ENCODE measurements at regions of chr13 and their contacts with region 1.

Region 1: DNA sequence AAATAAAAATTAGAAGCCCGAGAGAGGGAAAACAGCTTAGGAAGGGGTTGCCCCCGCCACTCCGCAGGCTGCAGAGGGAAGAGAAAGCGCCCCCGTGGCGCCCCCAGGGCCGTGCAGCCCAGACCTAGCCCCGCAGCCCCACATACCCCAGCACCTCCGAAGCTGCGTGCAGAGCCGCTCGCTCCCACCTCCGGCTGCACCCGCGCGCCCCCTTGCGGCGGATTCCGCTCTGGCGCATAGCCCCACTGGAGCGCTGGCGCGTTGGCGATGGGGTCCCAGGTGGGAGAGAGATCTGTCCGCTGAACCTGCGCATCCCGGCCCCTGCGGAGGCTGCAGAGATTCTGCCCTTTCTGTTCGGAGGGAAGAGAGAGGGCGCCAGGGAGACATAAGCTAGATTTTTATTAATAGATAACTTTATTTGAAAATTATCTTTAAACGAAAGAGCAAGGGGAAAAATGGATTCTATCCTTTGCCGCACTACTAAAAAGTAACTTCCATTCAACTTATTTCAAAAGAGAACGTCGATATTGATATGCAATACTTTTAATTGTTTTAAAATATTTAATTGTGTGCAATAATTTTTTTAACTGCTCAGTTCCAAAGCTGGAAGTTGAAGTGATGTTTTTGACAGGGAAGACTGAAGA is 11.7 kb upstream of the CLN5 start:
- DNase-seq: peak; percentile 13
- H3K4me3 ChIP-seq: peak overlapping the region; percentile 54
- H3K27ac ChIP-seq: no peak overlapping the region
- H3K27me3 ChIP-seq: peaks cover 22% of the 10 kb centered on the region
- CTCF ChIP-seq: peak; percentile 97

Region 2: GRCh38 chr13:76903544-76904162 is 76.5 kb before region 1 on chr13:
- CTCF ChIA-PET with region 1: interaction called, 15 read pairs
- POLR2A ChIA-PET with region 1: no interaction called
- DNase-seq: peak; percentile 50
- H3K4me3 ChIP-seq: no peak overlapping the region
- H3K27ac ChIP-seq: no peak overlapping the region
- H3K27me3 ChIP-seq: peaks cover 23% of the 10 kb centered on the region
- CTCF ChIP-seq: peak; percentile 100

Region 3: GRCh38 chr13:76955193-76955592 is 25.0 kb before region 1 on chr13:
- CTCF ChIA-PET with region 1: interaction called, 15 read pairs
- POLR2A ChIA-PET with region 1: no interaction called
- DNase-seq: no peak
- H3K4me3 ChIP-seq: no peak overlapping the region
- H3K27ac ChIP-seq: no peak overlapping the region
- H3K27me3 ChIP-seq: peaks cover 3% of the 10 kb centered on the region
- CTCF ChIP-seq: no peak

Region 4: GRCh38 chr13:77002590-77003190 is 22.5 kb after region 1 on chr13:
- CTCF ChIA-PET with region 1: interaction called, 26 read pairs
- POLR2A ChIA-PET with region 1: no interaction called
- DNase-seq: no peak
- H3K4me3 ChIP-seq: no peak overlapping the region
- H3K27ac ChIP-seq: no peak overlapping the region
- H3K27me3 ChIP-seq: no peaks in the 10 kb centered on the region
- CTCF ChIP-seq: peak; percentile 83